Naive thymus-derived CD4-positive, alpha-beta T cell (primary cell): ENCODE measurements at regions of chr2 and their contacts with region 1.

Region 1: GRCh38 chr2:43569921-43570320 is 25.9 kb downstream of the THADA start:
- DNase-seq: no peak
- ATAC-seq: no peak
- H3K4me3 ChIP-seq: no peak overlapping the region
- H3K4me3 Mint-ChIP-seq: peak overlapping the region in 1 of 10 donors; percentile 61
- H3K27ac ChIP-seq: no peak overlapping the region
- H3K27ac Mint-ChIP-seq: peak overlapping the region in 2 of 9 donors; percentile 17 to 64
- H3K4me1 ChIP-seq: peaks cover 0 to 12% of the 10 kb centered on the region in 2 donors
- H3K4me1 Mint-ChIP-seq: peaks cover 0 to 37% (median 7%) of the 10 kb centered on the region in 7 donors
- H3K27me3 ChIP-seq: no peaks in the 10 kb centered on the region
- H3K27me3 Mint-ChIP-seq: no peaks in the 10 kb centered on the region

Region 2: DNA sequence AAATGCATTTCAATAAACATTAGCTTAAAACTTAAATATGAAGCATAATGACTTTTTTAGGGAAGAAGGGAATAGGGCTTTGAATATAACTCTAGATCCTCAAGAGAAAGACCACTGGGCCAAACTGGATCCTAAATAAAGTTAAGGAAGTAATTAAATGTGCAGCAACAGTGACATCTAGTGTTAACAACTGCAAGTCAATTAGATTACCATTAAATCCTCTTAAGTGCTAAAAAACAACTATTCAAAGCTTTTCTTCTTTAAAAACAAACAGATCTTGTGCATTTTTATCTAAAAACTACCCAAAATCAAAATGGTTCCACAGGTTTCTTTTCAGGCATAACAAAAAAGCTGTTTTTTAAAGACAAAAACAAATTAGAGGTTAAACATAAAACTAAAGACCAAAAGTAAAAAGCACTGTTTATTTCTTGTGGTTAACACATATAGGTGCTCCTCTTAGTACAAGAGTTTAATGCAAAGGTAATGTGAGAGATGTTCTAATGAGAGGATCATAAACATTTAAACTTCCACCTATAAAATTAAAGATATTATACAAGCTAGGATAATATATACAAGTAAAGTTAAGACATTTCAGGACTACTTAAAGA is 85.5 kb before region 1 on chr2:
- CTCF ChIA-PET with region 1: no interaction called
- POLR2A ChIA-PET with region 1: no interaction called
- intact Hi-C with region 1: no loop called
- DNase-seq: peak in 7 of 9 donors; percentile 15 to 56 (median 47)
- ATAC-seq: peak; percentile 58
- H3K4me3 ChIP-seq: no peak overlapping the region
- H3K4me3 Mint-ChIP-seq: no peak overlapping the region
- H3K27ac ChIP-seq: no peak overlapping the region
- H3K27ac Mint-ChIP-seq: no peak overlapping the region
- H3K4me1 ChIP-seq: peaks cover 0 to 21% of the 10 kb centered on the region in 2 donors
- H3K4me1 Mint-ChIP-seq: peaks cover 0 to 15% (median 0%) of the 10 kb centered on the region in 7 donors
- H3K27me3 ChIP-seq: no peaks in the 10 kb centered on the region
- H3K27me3 Mint-ChIP-seq: no peaks in the 10 kb centered on the region

Region 3: DNA sequence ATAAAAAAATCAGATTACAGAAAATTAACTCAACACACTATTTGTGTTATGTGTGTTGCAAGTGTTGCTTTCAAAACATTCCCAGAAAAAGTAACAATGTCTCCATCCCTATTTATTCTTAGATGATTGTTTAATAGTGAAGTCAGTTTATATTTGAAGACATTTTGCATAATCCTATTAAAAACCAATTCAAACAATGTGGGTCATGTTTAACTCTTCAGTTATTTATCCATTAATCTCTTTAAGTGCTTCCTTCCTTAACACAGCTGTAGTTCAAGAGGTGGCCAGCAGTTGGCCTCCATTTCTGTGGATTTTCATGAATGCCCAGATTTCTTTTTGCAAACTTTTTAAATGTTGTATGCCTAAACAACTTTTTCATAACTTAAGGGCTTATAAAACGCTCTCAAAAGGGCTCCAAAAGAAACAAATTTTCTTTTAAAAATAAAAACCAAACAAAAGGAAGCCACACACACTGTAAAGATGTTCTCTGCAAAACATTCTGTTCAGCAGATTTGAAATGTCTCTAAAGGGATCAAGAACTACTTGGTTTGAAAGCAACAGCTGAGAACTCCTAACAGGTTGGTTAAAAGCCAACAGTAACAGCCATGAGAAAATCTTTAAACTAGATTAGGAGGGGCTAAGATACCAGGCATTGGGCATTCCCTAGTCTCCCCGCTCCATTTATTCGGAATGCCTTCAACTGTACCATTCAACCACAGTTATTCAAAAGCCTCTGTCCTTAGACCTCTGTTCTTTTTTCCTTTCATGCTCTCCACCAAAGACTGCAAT is 45.5 kb before region 1 on chr2:
- CTCF ChIA-PET with region 1: no interaction called
- POLR2A ChIA-PET with region 1: no interaction called
- intact Hi-C with region 1: no loop called
- DNase-seq: no peak
- ATAC-seq: no peak
- H3K4me3 ChIP-seq: no peak overlapping the region
- H3K4me3 Mint-ChIP-seq: no peak overlapping the region
- H3K27ac ChIP-seq: no peak overlapping the region
- H3K27ac Mint-ChIP-seq: no peak overlapping the region
- H3K4me1 ChIP-seq: no peaks in the 10 kb centered on the region
- H3K4me1 Mint-ChIP-seq: peaks cover 0 to 16% (median 6%) of the 10 kb centered on the region in 7 donors
- H3K27me3 ChIP-seq: no peaks in the 10 kb centered on the region
- H3K27me3 Mint-ChIP-seq: no peaks in the 10 kb centered on the region

Region 4: DNA sequence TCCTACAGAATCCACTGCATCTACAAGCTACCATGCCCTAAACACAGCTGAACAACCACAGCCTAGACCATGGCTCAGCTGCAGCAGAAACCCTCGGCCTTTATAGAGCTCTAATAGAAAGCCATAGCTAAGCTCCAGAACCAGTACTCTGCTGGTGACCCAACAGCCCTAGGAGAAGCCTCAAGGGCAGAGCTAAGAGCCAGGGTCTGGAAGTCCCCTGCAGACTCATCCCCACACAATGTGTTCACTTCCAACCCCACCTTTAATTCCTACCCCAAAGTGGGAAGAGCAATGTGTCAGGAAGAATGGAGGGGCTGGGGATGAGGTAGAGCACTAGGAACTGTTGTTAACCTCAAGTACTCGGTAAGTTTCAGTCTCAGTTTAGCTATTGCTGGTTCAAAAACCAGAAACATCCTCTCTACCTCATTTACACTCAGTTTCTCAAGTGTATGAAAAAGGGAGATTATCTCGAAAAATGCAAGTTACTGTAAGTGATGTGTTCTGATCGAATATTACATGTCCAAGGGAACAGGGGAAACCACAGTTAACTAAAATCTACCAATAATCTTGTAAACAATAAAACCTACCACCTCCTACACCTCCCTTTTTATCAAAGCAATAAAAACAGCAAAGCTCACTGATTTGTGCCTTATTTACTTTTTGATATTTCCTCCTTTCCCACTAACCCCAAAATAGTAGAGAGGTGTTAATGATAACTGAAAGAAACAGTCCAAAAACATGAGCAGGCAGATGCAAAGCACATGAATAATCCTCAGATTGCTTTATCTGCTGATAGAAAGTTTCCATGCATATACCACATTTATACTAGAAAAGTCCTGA is 10.3 kb before region 1 on chr2:
- CTCF ChIA-PET with region 1: interaction called, 3 read pairs
- POLR2A ChIA-PET with region 1: no interaction called
- intact Hi-C with region 1: loop called in 1 of 2 experiments (anchors 1 kb)
- DNase-seq: peak in 1 of 9 donors; percentile 34
- ATAC-seq: no peak
- H3K4me3 ChIP-seq: no peak overlapping the region
- H3K4me3 Mint-ChIP-seq: peak overlapping the region in 1 of 10 donors; percentile 80
- H3K27ac ChIP-seq: no peak overlapping the region
- H3K27ac Mint-ChIP-seq: peak overlapping the region in 6 of 9 donors; percentile 24 to 89 (median 54)
- H3K4me1 ChIP-seq: peaks cover 0 to 6% of the 10 kb centered on the region in 2 donors
- H3K4me1 Mint-ChIP-seq: peaks cover 0 to 54% (median 5%) of the 10 kb centered on the region in 7 donors
- H3K27me3 ChIP-seq: no peaks in the 10 kb centered on the region
- H3K27me3 Mint-ChIP-seq: no peaks in the 10 kb centered on the region

Region 5: DNA sequence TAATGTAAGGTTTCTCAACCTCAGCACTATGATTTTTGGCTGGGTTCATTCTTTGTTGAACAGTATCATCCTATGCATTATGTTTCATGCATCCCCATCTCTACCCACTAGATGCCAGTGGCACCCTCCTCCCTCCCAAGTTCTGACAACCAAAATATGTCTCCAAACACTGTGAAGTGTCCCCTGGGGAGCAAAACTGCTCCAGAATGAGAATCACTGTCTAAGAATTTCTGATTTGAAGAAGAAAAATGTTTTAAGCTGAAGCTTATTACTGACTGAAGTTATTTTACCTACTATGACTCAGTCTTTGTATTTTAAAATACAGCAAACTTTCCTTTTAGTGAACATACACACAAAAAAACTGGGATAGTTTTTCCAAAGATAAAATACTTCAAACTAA is 22.5 kb after region 1 on chr2:
- CTCF ChIA-PET with region 1: no interaction called
- POLR2A ChIA-PET with region 1: no interaction called
- intact Hi-C with region 1: no loop called
- DNase-seq: no peak
- ATAC-seq: no peak
- H3K4me3 ChIP-seq: no peak overlapping the region
- H3K4me3 Mint-ChIP-seq: no peak overlapping the region
- H3K27ac ChIP-seq: no peak overlapping the region
- H3K27ac Mint-ChIP-seq: peak overlapping the region in 1 of 9 donors; percentile 26
- H3K4me1 ChIP-seq: peaks cover 9 to 13% of the 10 kb centered on the region in 2 donors
- H3K4me1 Mint-ChIP-seq: peaks cover 23 to 45% (median 38%) of the 10 kb centered on the region in 7 donors
- H3K27me3 ChIP-seq: no peaks in the 10 kb centered on the region
- H3K27me3 Mint-ChIP-seq: no peaks in the 10 kb centered on the region